ENCODE measurements at regions of chr6 and their contacts with region 1.

Region 1: GRCh38 chr6:55713436-55713835 is 134.4 kb upstream of the HMGCLL1 start:
- DNase-seq: no peak
- ATAC-seq: no peak
- H3K4me3 ChIP-seq: no peak overlapping the region
- H3K4me3 Mint-ChIP-seq: no peak overlapping the region
- H3K27ac ChIP-seq: no peak overlapping the region
- H3K27ac Mint-ChIP-seq: no peak overlapping the region
- H3K4me1 ChIP-seq: no peaks in the 10 kb centered on the region
- H3K4me1 Mint-ChIP-seq: no peaks in the 10 kb centered on the region
- H3K27me3 ChIP-seq: no peaks in the 10 kb centered on the region
- H3K27me3 Mint-ChIP-seq: no peaks in the 10 kb centered on the region
- CTCF ChIP-seq: no peak

Region 2: GRCh38 chr6:55512897-55513296 is 200.5 kb before region 1 on chr6:
- CTCF ChIA-PET with region 1: no interaction called
- POLR2A ChIA-PET with region 1: no interaction called
- intact Hi-C with region 1: loop called in 1 of 2 experiments (anchors 10 kb)
- DNase-seq: no peak
- ATAC-seq: no peak
- H3K4me3 ChIP-seq: no peak overlapping the region
- H3K4me3 Mint-ChIP-seq: no peak overlapping the region
- H3K27ac ChIP-seq: no peak overlapping the region
- H3K27ac Mint-ChIP-seq: no peak overlapping the region
- H3K4me1 ChIP-seq: no peaks in the 10 kb centered on the region
- H3K4me1 Mint-ChIP-seq: no peaks in the 10 kb centered on the region
- H3K27me3 ChIP-seq: no peaks in the 10 kb centered on the region
- H3K27me3 Mint-ChIP-seq: no peaks in the 10 kb centered on the region
- CTCF ChIP-seq: no peak

Region 3: DNA sequence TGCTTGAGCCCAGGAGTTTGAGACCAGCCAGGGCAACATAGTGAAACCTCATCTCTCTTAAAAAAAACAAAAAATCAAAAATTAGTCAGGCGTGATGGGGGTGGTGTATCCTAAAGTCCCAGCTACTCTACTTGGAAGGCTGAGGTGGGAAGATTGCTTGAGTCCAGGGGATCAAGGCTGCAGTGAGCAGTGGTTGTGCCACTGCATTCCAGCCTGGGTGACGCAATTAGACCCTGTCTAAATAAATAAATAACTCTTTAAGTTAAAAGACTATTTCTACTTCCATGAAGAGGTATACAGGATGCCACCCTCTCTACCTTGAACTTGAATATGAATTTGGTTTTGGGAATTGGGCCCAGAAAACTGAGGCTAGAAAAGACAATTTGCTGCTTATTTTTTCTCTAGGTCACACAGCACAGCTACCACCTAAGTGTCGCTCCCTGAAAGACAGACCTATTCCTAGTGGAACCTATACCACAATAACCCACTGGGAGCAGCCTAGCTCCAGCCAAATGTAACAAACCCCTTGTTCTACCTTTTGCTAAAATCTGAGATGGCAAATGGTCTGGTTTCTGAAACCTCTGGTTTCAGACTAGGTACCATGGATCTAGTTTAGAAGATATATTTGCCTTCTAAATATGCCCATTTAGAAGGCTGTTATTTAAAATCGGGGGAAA is 169.7 kb before region 1 on chr6:
- CTCF ChIA-PET with region 1: no interaction called
- POLR2A ChIA-PET with region 1: no interaction called
- intact Hi-C with region 1: no loop called
- DNase-seq: no peak
- ATAC-seq: no peak
- H3K4me3 ChIP-seq: no peak overlapping the region
- H3K4me3 Mint-ChIP-seq: no peak overlapping the region
- H3K27ac ChIP-seq: no peak overlapping the region
- H3K27ac Mint-ChIP-seq: no peak overlapping the region
- H3K4me1 ChIP-seq: no peaks in the 10 kb centered on the region
- H3K4me1 Mint-ChIP-seq: no peaks in the 10 kb centered on the region
- H3K27me3 ChIP-seq: no peaks in the 10 kb centered on the region
- H3K27me3 Mint-ChIP-seq: no peaks in the 10 kb centered on the region
- CTCF ChIP-seq: no peak

Region 4: DNA sequence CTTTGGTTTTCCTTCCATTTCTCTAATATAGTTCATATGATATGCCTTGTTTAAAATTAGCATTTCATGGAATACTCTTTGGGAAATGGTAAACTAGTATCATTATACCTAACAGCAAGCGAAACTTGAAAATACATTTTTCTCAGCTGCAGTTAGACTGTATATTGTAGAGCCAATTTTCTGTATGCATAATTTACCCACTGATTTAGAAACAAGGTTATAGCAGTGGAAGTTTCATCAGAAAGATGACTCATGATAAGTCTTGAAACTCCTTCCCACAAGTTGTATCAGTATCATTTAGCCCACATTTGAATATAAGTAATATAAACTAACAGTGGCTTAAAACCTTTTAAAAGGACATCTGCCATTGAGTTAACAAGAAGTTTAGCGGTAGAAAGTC is 326.8 kb after region 1 on chr6:
- CTCF ChIA-PET with region 1: no interaction called
- POLR2A ChIA-PET with region 1: no interaction called
- intact Hi-C with region 1: no loop called
- DNase-seq: no peak
- ATAC-seq: no peak
- H3K4me3 ChIP-seq: no peak overlapping the region
- H3K4me3 Mint-ChIP-seq: no peak overlapping the region
- H3K27ac ChIP-seq: no peak overlapping the region
- H3K27ac Mint-ChIP-seq: no peak overlapping the region
- H3K4me1 ChIP-seq: no peaks in the 10 kb centered on the region
- H3K4me1 Mint-ChIP-seq: no peaks in the 10 kb centered on the region
- H3K27me3 ChIP-seq: no peaks in the 10 kb centered on the region
- H3K27me3 Mint-ChIP-seq: no peaks in the 10 kb centered on the region
- CTCF ChIP-seq: no peak

Measured in CD8-positive, alpha-beta T cell (primary cell).